HEK293 (cell line): ENCODE measurements at regions of chr19 and their contacts with region 1.

Region 1: GRCh38 chr19:49712397-49712859 is 21.5 kb downstream of the CPT1C start:
- H3K4me3 ChIP-seq: no peak overlapping the region
- H3K27ac ChIP-seq: no peak overlapping the region
- H3K4me1 ChIP-seq: no peaks in the 10 kb centered on the region
- CTCF ChIP-seq: no peak

Region 2: GRCh38 chr19:49727217-49728030 is 15.0 kb after region 1 on chr19:
- CTCF ChIA-PET with region 1: interaction called, 18 read pairs
- POLR2A ChIA-PET with region 1: no interaction called
- H3K4me3 ChIP-seq: no peak overlapping the region
- H3K27ac ChIP-seq: no peak overlapping the region
- H3K4me1 ChIP-seq: no peaks in the 10 kb centered on the region
- CTCF ChIP-seq: no peak

Region 3: DNA sequence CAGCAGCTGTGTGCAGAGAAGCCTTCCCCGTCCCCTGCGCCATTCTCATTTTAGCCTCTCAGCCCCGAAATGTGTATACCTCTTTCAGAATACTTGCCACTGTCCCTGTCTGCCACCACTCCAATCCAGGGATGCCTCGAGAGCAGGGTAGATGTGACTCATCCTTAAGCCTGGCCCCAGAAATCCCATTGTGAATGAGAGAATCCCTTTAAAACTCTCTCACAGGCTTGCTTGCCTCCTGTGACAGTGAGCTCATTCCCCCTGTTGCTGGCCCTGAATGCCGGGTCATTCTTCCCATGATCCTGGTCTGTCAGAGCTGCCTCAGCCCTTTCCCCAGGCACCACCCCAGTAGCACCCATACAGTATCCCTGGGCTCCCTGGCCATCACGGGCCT is 63.9 kb after region 1 on chr19:
- CTCF ChIA-PET with region 1: no interaction called
- POLR2A ChIA-PET with region 1: no interaction called
- H3K4me3 ChIP-seq: no peak overlapping the region
- H3K27ac ChIP-seq: no peak overlapping the region
- H3K4me1 ChIP-seq: no peaks in the 10 kb centered on the region
- CTCF ChIP-seq: no peak

Region 4: DNA sequence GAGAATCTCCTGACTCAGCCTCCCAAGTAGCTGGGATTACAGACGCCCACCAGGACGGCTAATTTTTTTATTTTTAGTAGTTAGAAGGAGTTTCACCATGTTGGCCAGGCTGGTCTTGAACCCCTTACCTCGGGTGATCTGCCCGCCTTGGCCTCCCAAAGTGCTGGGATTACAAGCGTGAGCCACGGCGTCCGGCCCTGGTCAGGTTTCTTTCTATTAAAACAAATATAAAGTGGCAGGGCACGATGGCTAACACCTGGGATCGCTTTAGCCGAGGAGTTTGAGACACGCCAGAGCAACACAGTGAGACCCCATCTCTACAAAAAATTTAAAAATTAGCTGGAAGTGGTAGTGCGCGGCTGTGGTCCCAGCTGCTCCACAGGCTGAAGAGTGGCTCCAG is 104.2 kb after region 1 on chr19:
- CTCF ChIA-PET with region 1: no interaction called
- POLR2A ChIA-PET with region 1: no interaction called
- H3K4me3 ChIP-seq: no peak overlapping the region
- H3K27ac ChIP-seq: no peak overlapping the region
- H3K4me1 ChIP-seq: peaks cover 17% of the 10 kb centered on the region; the same call in 1 of the 2 replicates
- CTCF ChIP-seq: no peak

Region 5: DNA sequence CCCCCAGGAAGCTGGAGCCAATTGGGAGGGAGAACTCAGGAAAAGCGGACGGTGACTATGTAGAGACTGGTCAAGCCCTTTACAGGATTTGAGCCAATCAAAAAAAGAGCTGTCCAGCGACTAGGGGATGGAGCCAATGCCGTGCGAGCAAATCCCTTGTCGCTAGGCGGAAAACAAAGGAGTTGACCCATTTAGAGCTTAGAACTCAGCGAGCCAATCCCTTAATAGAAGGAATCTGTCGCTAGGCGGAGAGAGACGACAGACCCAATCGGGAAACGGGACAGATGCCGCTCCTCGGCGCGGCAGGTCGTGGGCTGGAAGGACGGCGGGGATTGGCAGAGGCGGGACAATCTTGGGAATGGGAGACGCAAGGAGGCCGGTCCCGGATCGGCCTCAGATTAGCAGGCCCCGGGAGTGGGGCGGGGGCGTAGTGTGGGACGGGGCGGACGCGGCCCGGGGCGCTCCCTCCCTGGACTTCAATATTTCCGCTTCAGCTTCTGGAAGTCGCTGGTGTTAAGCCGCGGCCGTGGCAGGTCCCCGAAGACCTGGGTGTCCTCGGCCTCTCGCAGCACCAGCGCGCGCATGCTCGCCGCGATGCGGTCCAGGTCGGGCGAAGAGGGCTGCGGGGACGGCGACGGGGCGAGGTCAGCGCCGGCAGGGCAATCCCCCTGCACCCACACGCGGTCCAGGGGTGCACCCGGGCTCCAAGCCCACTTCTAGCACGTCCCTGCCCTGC is 157.2 kb after region 1 on chr19:
- CTCF ChIA-PET with region 1: no interaction called
- POLR2A ChIA-PET with region 1: no interaction called
- H3K4me3 ChIP-seq: peak overlapping the region; percentile 40
- H3K27ac ChIP-seq: peak overlapping the region; percentile 92
- H3K4me1 ChIP-seq: peaks cover 25% of the 10 kb centered on the region
- CTCF ChIP-seq: no peak